Activated CD4-positive, alpha-beta T cell treated with anti-CD3 and anti-CD28 coated beads for 36 hours (primary cell): ENCODE measurements at regions of chr19 and their contacts with region 1.

Region 1: GRCh38 chr19:48363810-48364563 is at the starts of genes SYNGR4 and TMEM143:
- DNase-seq: peak; percentile 99
- ATAC-seq: peak; percentile 90
- H3K4me3 Mint-ChIP-seq: peak within 1 kb of the TSS; percentile 84
- H3K27ac Mint-ChIP-seq: peak within 1 kb of the TSS; percentile 95
- H3K4me1 Mint-ChIP-seq: peaks cover 13% of the 10 kb centered on the region
- H3K27me3 Mint-ChIP-seq: no peaks in the 10 kb centered on the region
- total RNA-seq, gene SYNGR4: 0.25 TPM in 1 of 2 experiments, not detected in the other
- total RNA-seq, gene TMEM143: 18.9 to 21.5 TPM

Region 2: DNA sequence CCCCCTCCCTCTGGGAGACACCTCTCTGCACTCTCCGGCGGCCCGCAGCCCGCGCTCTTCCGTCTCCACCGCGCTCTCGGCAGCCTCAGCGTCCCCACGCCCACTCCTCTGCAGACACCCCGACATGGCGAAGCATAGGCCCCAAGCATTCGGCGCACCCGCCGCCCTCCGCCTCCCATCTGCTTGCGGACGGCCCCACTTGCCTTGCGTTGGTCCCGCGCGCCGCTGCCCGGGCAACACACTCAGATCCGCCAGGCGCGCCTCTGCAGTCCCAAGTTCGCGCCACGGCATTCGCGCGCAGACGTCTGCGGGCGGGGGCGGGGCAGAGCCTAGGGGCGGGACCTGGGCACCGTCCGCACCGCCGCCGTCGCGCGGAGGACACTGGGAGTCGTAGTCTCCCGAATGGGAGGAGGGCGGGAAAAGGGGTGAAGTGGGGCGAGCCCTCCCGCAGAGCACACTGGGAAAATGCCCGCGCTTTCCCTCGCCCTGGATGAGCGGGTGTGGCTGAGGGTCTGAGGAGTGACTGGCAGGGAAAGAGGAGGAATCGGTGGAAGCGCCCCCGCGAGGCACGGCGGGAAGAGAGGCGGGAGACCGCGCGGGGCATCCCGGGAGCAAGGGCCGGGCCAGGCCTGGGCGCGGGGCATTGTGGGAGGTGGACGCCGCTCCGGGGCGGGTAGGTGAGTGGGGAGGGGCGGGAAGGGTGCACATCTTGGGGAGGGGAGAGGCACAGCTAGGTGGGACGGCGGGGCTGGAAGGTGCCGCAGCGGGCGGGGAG is 193.8 kb before region 1 on chr19 and contains the starts of genes LIG1 and ZSWIM9:
- CTCF ChIA-PET with region 1: no interaction called
- POLR2A ChIA-PET with region 1: no interaction called
- intact Hi-C with region 1: loop called in 1 of 2 experiments (anchors 1 kb)
- DNase-seq: peak; percentile 96
- ATAC-seq: peak; percentile 90
- H3K4me3 Mint-ChIP-seq: peak within 1 kb of the TSS; percentile 79
- H3K27ac Mint-ChIP-seq: peak within 1 kb of the TSS; percentile 95
- H3K4me1 Mint-ChIP-seq: peaks cover 30% of the 10 kb centered on the region
- H3K27me3 Mint-ChIP-seq: no peaks in the 10 kb centered on the region
- total RNA-seq, gene LIG1: 193 to 194 TPM
- total RNA-seq, gene ZSWIM9: 7.4 to 10.9 TPM

Region 3: DNA sequence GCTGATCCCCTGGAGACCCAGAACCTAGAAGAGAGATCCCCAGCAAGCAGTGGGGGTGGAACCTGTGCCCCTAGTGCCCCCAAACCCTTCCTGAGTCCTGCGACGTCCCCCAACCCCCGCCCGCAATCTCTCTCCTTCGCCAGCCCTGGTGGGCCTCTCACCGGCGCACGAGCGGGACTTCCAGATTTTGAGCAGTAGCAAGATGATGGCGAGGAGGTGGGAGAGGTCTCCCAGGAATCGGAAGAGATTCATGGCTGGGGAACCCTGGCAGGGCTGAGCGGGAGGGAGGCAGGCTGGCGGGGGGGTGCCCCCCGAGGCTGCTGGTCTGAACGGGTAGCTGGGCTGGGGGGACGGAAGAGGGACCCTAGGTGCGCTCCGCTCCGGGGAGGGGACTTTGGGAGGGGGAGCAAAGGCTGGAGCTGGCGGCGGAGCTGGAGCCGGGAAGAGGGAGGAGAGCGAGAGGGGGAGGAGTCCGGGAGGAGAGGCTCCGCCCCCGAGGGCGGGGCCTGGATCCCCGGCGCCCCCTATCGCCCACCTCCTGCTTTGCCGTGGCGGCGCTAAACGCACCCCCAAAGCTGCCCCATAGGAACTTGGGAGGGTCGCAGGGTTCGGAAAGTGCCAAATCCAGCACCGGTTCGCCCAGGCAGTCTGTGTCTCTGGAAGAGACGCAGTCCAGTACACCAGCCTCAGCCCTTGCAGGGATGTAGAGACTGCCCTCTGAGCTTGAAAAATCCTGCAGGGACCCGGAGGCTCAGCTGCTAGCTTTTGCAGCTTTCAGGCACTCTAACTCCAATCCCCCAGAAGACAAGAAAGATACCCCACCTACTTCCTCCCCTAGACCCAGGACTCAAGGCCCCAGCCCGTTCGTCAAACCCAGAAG is 27.4 kb after region 1 on chr19 and contains the start of gene KDELR1:
- CTCF ChIA-PET with region 1: interaction called, 17 read pairs
- POLR2A ChIA-PET with region 1: interaction called, 10 read pairs
- intact Hi-C with region 1: loop called (anchors 1 kb)
- DNase-seq: peak; percentile 85
- ATAC-seq: peak; percentile 82
- H3K4me3 Mint-ChIP-seq: peak within 1 kb of the TSS; percentile 92
- H3K27ac Mint-ChIP-seq: peak within 1 kb of the TSS; percentile 93
- H3K4me1 Mint-ChIP-seq: peaks cover 17% of the 10 kb centered on the region
- H3K27me3 Mint-ChIP-seq: peaks cover 19% of the 10 kb centered on the region
- total RNA-seq, gene KDELR1: 69.5 to 78.8 TPM

Region 4: DNA sequence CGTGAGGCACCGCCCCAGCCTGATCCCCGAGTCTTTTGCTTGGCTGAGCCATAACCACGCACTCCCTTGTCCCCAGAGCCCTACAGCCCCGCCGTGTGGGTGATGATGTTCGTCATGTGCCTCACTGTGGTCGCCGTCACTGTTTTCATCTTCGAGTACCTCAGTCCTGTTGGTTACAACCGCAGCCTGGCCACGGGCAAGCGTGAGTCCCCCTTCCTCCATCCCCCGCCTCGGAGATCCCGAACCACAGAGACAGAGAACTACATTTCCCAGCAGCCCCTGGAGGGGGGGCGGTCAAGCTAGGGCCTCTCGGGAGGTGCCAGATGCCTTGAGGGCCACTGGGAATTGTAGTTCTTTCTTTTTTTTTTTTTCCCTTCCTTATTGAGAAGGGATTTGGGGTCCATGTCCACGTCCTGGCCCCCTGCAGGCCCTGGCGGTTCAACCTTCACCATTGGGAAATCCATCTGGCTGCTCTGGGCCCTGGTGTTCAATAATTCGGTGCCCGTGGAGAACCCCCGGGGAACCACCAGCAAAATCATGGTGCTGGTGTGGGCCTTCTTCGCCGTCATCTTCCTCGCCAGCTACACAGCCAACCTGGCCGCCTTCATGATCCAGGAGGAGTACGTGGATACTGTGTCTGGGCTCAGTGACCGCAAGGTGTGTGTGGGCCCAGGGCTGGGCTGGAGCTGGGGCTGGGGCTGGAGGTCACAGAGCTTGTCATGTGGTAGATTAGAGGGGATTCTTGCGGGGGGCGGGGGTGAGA is 55.4 kb after region 1 on chr19:
- CTCF ChIA-PET with region 1: no interaction called
- POLR2A ChIA-PET with region 1: no interaction called
- intact Hi-C with region 1: loop called (anchors 1 to 5 kb)
- DNase-seq: peak; percentile 87
- ATAC-seq: peak; percentile 81
- H3K4me3 Mint-ChIP-seq: peak overlapping the region; percentile 29
- H3K27ac Mint-ChIP-seq: peak overlapping the region; percentile 83
- H3K4me1 Mint-ChIP-seq: peaks cover 21% of the 10 kb centered on the region
- H3K27me3 Mint-ChIP-seq: peaks cover 15% of the 10 kb centered on the region

Region 5: DNA sequence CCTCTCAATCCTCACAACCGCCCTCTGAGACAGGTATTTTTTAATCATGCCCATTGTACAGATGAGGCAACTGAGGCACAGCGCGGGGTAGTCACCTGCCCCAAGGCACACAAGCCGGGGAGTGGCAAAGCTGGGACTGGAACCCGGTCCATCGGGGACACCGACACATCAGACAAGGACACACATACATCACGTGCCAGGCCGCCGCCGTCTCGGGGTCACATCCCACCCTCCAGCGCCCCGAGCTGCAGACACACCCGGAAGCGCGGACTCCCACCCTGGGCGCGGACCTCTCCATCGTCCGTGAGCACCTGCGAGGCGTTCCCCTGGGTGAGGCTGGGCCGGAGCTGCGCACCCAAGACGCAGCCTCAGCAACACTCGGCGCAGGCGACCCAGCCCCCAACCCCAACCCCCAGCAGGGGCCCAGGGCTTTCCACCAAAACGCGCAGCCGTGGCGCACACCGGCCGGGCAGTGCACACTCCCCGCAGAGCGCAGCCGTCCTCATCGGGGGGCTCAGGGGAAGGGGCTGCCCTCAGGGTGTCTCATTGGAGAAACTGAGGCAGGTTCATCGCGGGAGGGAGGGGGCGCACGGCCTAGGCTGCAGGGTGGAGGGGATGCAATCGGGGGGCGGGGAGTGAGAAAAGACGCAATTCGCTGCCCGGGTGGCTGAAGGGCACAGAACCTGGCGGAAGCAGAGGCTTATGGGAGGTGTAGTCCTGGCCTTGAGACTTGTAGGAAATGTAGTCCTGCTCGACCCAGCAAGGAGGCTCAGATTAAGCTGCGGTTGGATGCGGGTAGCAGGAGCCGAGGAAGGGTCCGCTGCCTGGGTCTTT is 149.5 kb after region 1 on chr19:
- CTCF ChIA-PET with region 1: interaction called, 3 read pairs
- POLR2A ChIA-PET with region 1: no interaction called
- intact Hi-C with region 1: loop called (anchors 1 kb)
- DNase-seq: peak; percentile 86
- ATAC-seq: peak; percentile 81
- H3K4me3 Mint-ChIP-seq: no peak overlapping the region
- H3K27ac Mint-ChIP-seq: peak overlapping the region; percentile 30
- H3K4me1 Mint-ChIP-seq: peaks cover 8% of the 10 kb centered on the region
- H3K27me3 Mint-ChIP-seq: no peaks in the 10 kb centered on the region

Region 6: GRCh38 chr19:48637170-48637947 is 273.4 kb after region 1 on chr19 and contains the start of gene DBP:
- CTCF ChIA-PET with region 1: interaction called, 4 read pairs
- POLR2A ChIA-PET with region 1: no interaction called
- intact Hi-C with region 1: loop called in 1 of 2 experiments (anchors 2 kb)
- DNase-seq: peak; percentile 98
- ATAC-seq: peak; percentile 75
- H3K4me3 Mint-ChIP-seq: peak within 1 kb of the TSS; percentile 83
- H3K27ac Mint-ChIP-seq: peak within 1 kb of the TSS; percentile 99
- H3K4me1 Mint-ChIP-seq: peaks cover 55% of the 10 kb centered on the region
- H3K27me3 Mint-ChIP-seq: no peaks in the 10 kb centered on the region
- total RNA-seq, gene DBP: 8.3 to 12.4 TPM